Dorsolateral prefrontal cortex (tissue), 120 donors: ENCODE measurements at regions of chr6 and their contacts with region 1.

Region 1: GRCh38 chr6:161922631-161923119 is 648.8 kb upstream of the AGPAT4 start:
- DNase-seq: peak in 4 of 10 donors; percentile 8 to 50 (median 30)
- H3K4me3 ChIP-seq: no peak overlapping the region
- H3K27ac ChIP-seq: no peak overlapping the region
- H3K27me3 ChIP-seq: no peaks in the 10 kb centered on the region
- CTCF ChIP-seq: peak in 53 of 56 donors; percentile 12 to 69 (median 47)

Region 2: DNA sequence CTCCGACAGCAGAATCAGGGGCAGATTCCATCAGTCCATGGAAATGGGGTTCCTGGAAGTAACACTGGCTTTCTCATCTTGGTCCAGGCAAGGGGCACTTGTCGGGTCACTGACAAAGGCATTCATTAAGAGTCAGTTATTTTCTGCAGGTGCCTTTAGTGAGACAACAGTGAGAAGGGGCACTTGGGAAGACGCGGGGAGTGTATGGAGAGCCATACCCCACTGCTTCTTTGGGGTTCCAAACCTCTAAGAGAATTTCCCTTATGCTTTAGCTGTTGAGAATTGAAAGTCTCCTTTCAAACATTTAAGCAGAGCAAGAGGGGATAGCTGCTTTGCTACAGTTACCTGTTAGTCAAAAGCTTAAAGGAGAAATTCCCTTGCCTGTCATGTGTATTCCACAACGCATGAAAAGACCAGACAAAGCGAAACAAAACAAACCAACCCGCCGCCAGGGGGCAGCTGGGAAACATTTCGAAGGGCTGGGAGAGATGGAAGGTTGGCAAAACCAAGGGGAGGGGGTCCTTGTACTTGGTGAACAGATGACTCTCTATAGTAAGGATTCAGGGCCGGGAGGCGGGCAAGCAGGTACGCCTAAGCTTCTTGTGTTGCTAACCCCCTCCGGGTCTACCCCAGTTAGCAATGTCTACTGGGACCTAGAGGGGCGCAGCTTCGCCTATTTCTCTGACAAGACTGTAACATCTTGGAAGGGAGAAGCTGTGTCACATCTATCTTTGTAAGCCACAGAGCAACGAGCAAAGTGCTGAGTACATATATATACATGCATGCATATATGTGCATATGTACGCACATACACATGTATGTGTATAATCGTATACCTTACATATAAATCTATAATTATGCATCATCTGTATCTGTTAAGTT is 173.9 kb before region 1 on chr6:
- intact Hi-C with region 1: loop called in 1 of 2 experiments (anchors 10 kb)
- DNase-seq: peak in 8 of 10 donors; percentile 4 to 60 (median 48)
- H3K4me3 ChIP-seq: peak overlapping the region in 39 of 59 donors; percentile 1 to 55 (median 27)
- H3K27ac ChIP-seq: no peak overlapping the region
- H3K27me3 ChIP-seq: no peaks in the 10 kb centered on the region
- CTCF ChIP-seq: peak in 55 of 56 donors; percentile 28 to 74 (median 56)